ENCODE measurements at regions of chr11 and their contacts with region 1.

Region 1: DNA sequence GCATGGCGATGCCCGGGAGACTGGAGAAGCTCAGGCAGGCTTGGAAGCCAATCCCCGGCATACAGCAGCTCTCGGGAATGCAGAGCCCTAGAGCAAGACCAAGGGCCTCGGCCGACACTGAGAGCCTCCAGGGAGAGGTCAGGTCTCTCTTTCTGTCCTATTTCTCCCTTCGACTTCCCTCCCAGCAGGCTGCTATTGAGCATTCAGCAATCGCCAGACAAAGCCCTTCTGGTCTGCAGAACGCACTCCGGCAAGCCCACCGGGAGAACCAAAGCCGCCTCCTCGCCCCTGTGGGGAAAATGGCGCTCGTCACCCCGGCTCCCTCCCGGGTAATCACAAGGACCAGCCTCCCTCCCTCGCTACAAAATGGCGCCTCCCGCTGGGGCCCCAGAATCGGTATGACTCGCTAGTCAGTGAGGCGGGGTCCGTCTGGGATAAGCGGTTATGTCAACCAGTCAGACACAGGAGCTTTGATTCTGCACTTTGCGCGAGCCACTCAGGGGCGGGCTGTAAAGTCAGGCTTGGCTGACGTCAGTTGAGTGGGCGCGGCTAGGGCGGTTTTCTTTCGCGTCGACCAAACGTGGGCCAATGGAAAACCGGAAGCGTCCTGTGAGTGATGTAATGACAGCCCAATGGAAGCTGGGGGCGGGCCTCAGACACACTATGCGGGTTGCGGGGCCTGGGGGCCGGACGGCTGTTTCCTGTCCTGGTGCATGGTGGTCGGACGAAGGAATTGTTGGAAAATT is at the start of gene ZNF143:
- DNase-seq: peak; percentile 100
- H3K4me3 ChIP-seq: peak within 1 kb of the TSS; percentile 83
- H3K4me3 Mint-ChIP-seq: peak within 1 kb of the TSS; percentile 96
- H3K27ac Mint-ChIP-seq: peak within 1 kb of the TSS; percentile 99
- H3K4me1 ChIP-seq: peaks cover 17% of the 10 kb centered on the region
- H3K4me1 Mint-ChIP-seq: peaks cover 7% of the 10 kb centered on the region
- H3K27me3 ChIP-seq: no peaks in the 10 kb centered on the region
- H3K27me3 Mint-ChIP-seq: no peaks in the 10 kb centered on the region
- CTCF ChIP-seq: no peak
- total RNA-seq, gene ZNF143: 27.2 and 31.2 TPM in 2 replicates

Region 2: GRCh38 chr11:9109939-9110731 is 350.4 kb before region 1 on chr11:
- CTCF ChIA-PET with region 1: no interaction called
- POLR2A ChIA-PET with region 1: no interaction called
- intact Hi-C with region 1: no loop called
- DNase-seq: no peak
- H3K4me3 ChIP-seq: no peak overlapping the region
- H3K4me3 Mint-ChIP-seq: no peak overlapping the region
- H3K27ac Mint-ChIP-seq: no peak overlapping the region
- H3K4me1 ChIP-seq: no peaks in the 10 kb centered on the region; the same call in 1 of the 2 replicates
- H3K4me1 Mint-ChIP-seq: no peaks in the 10 kb centered on the region
- H3K27me3 ChIP-seq: no peaks in the 10 kb centered on the region
- H3K27me3 Mint-ChIP-seq: no peaks in the 10 kb centered on the region
- CTCF ChIP-seq: no peak

Region 3: GRCh38 chr11:9314291-9315036 is 146.0 kb before region 1 on chr11 and contains the start of gene TMEM41B:
- CTCF ChIA-PET with region 1: no interaction called
- POLR2A ChIA-PET with region 1: no interaction called
- intact Hi-C with region 1: loop called (anchors 2 kb)
- DNase-seq: peak; percentile 98 to 99
- H3K4me3 ChIP-seq: peak within 1 kb of the TSS; percentile 98
- H3K4me3 Mint-ChIP-seq: peak within 1 kb of the TSS; percentile 87
- H3K27ac Mint-ChIP-seq: peak within 1 kb of the TSS; percentile 99
- H3K4me1 ChIP-seq: peaks cover 37% of the 10 kb centered on the region
- H3K4me1 Mint-ChIP-seq: peaks cover 24% of the 10 kb centered on the region
- H3K27me3 ChIP-seq: no peaks in the 10 kb centered on the region
- H3K27me3 Mint-ChIP-seq: no peaks in the 10 kb centered on the region
- CTCF ChIP-seq: peak in 1 of 2 experiments; percentile 16
- total RNA-seq, gene TMEM41B: 103 and 110 TPM in 2 replicates

Region 4: GRCh38 chr11:9363954-9364912 is 96.3 kb before region 1 on chr11:
- CTCF ChIA-PET with region 1: no interaction called
- POLR2A ChIA-PET with region 1: interaction called, 17 read pairs
- intact Hi-C with region 1: loop called (anchors 2 kb)
- DNase-seq: peak; percentile 98
- H3K4me3 ChIP-seq: peak overlapping the region; percentile 57
- H3K4me3 Mint-ChIP-seq: peak overlapping the region; percentile 71
- H3K27ac Mint-ChIP-seq: peak overlapping the region; percentile 96
- H3K4me1 ChIP-seq: peaks cover 31% of the 10 kb centered on the region
- H3K4me1 Mint-ChIP-seq: peaks cover 17% of the 10 kb centered on the region
- H3K27me3 ChIP-seq: no peaks in the 10 kb centered on the region
- H3K27me3 Mint-ChIP-seq: no peaks in the 10 kb centered on the region
- CTCF ChIP-seq: no peak

Region 5: DNA sequence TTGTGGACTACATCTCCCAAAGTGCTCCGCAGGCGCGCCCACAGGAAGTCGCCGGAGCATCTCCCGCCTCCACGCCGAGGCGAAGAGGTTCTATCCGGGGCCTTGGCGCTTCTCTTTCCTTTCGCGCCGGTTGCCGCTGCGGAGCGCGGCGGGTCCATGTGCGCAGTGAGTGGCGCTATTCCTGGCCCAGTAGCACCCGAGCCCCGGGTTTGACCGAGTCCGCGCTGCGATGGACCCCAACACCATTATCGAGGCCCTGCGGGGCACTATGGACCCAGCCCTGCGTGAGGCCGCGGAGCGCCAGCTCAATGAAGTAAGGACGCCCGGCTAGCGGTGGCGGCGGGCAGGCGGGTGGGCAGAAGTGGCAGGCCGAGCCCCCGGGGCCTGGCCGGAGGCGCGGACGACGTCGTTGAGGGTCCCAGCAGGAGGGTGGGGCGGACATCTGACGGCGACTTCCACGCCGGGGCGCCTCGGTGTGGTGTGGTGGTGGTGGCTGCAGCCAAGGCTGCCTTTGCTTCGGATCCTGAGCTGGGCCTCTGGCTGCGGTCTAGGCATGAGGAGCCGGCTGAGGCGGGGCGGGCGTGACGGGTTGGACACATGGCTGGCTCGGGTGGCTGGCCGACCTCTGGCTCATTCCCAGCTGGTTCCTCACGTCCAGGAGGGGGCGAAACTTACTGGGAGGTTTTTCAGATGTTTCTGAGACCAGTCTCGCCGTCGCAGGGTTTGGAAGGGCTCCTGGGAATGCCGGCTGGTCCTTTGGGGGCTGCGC is 75.8 kb before region 1 on chr11 and contains the start of gene IPO7:
- CTCF ChIA-PET with region 1: no interaction called
- POLR2A ChIA-PET with region 1: interaction called, 23 read pairs
- intact Hi-C with region 1: loop called (anchors 2 kb)
- DNase-seq: peak; percentile 92 to 93
- H3K4me3 ChIP-seq: peak within 1 kb of the TSS; percentile 90
- H3K4me3 Mint-ChIP-seq: peak within 1 kb of the TSS; percentile 94
- H3K27ac Mint-ChIP-seq: peak within 1 kb of the TSS; percentile 98
- H3K4me1 ChIP-seq: peaks cover 30% of the 10 kb centered on the region
- H3K4me1 Mint-ChIP-seq: peaks cover 29% of the 10 kb centered on the region
- H3K27me3 ChIP-seq: no peaks in the 10 kb centered on the region
- H3K27me3 Mint-ChIP-seq: no peaks in the 10 kb centered on the region
- CTCF ChIP-seq: peak; percentile 20 to 44
- total RNA-seq, gene IPO7: 196 and 199 TPM in 2 replicates

Region 6: DNA sequence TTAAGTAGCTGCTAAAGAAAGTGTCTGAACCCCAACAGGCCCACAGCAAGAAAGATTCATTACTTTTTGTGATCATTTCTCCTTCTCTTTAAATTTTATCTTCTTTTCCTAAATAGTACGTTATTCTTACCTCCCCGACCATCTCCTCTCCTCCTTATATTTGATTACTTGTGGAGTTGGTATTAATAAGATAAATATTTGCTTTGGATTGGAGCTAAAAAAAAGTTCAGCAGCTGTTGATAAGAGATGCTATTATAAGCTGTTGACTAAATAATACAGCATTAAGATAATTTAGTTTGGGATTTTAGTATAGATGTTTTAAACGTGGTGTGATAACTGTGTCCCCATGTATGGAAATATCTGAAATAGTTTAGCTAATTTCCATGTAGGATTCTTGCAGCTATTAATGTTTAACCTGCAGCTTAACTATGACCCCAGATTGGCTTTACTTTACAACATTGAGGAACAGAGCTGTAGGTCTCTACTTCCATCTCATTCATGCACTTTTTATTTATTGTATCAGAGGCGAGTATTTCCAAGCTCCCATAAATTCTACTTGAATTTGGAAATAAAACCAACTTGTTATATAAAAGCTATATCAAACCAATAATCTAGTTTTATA is 38.1 kb after region 1 on chr11:
- CTCF ChIA-PET with region 1: interaction called, 9 read pairs
- POLR2A ChIA-PET with region 1: interaction called, 33 read pairs
- intact Hi-C with region 1: loop called (anchors 2 kb)
- DNase-seq: no peak
- H3K4me3 ChIP-seq: no peak overlapping the region
- H3K4me3 Mint-ChIP-seq: no peak overlapping the region
- H3K27ac Mint-ChIP-seq: peak overlapping the region; percentile 30
- H3K4me1 ChIP-seq: peaks cover 44% of the 10 kb centered on the region
- H3K4me1 Mint-ChIP-seq: peaks cover 26% of the 10 kb centered on the region
- H3K27me3 ChIP-seq: no peaks in the 10 kb centered on the region
- H3K27me3 Mint-ChIP-seq: no peaks in the 10 kb centered on the region
- CTCF ChIP-seq: no peak

Region 7: GRCh38 chr11:9565822-9566560 is 105.5 kb after region 1 on chr11:
- CTCF ChIA-PET with region 1: no interaction called
- POLR2A ChIA-PET with region 1: interaction called, 10 read pairs
- intact Hi-C with region 1: loop called (anchors 1 kb)
- DNase-seq: peak; percentile 90 to 91
- H3K4me3 ChIP-seq: no peak overlapping the region
- H3K4me3 Mint-ChIP-seq: peak overlapping the region; percentile 57
- H3K27ac Mint-ChIP-seq: peak overlapping the region; percentile 100
- H3K4me1 ChIP-seq: peaks cover 56% of the 10 kb centered on the region
- H3K4me1 Mint-ChIP-seq: peaks cover 54% of the 10 kb centered on the region
- H3K27me3 ChIP-seq: no peaks in the 10 kb centered on the region
- H3K27me3 Mint-ChIP-seq: no peaks in the 10 kb centered on the region
- CTCF ChIP-seq: no peak

Region 8: DNA sequence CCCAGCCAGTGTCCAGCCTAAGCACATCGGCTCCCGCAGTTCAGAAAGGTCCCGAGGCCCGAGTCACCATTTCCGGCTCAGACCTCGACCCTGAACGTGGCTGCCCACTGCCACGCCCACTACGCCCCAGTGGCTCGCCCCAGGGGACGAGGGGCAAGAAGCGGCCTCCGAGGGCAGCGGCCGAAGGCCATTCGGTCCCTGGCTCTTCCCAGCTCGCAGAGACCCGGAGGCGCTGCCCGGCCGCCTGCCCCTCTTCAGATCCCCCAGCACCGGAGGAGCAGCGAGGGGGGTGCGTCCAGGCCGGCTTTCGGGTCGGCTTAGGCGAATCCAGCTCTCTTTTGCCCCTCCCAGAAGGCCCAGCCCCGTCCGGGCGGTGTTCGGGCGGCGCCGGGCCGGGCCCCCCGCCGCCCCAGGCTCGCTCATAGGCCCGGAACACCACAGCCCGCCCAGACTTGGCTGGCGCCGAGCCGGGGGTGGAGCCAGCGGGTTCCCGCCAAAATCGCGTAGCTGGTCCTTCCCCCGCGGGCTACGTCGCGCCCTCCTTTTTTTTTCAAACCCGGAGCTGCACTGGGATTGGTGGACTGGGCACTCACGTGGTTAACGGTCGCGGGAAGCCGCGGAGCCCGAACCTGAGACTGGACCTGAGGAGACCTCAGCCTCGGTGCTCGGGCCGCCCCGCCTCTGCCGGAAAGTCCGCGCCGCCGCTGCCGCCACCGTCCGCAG is 112.7 kb after region 1 on chr11 and contains the start of gene WEE1:
- CTCF ChIA-PET with region 1: interaction called, 6 read pairs
- POLR2A ChIA-PET with region 1: interaction called, 42 read pairs
- intact Hi-C with region 1: loop called (anchors 1 kb)
- DNase-seq: peak; percentile 99 to 100
- H3K4me3 ChIP-seq: peak within 1 kb of the TSS; percentile 87
- H3K4me3 Mint-ChIP-seq: peak within 1 kb of the TSS; percentile 94
- H3K27ac Mint-ChIP-seq: peak within 1 kb of the TSS; percentile 100
- H3K4me1 ChIP-seq: peaks cover 40% of the 10 kb centered on the region
- H3K4me1 Mint-ChIP-seq: peaks cover 37% of the 10 kb centered on the region
- H3K27me3 ChIP-seq: no peaks in the 10 kb centered on the region
- H3K27me3 Mint-ChIP-seq: no peaks in the 10 kb centered on the region
- CTCF ChIP-seq: no peak
- total RNA-seq, gene WEE1: 108 and 116 TPM in 2 replicates